ENCODE measurements at regions of chr14 and their contacts with region 1.

Region 1: GRCh38 chr14:97185186-97185585 is 388.0 kb downstream of the VRK1 start:
- DNase-seq: no peak
- ATAC-seq: peak; percentile 45; the same call in 2 of the 3 replicates
- H3K4me3 ChIP-seq: no peak overlapping the region
- H3K27ac ChIP-seq: no peak overlapping the region
- H3K4me1 ChIP-seq: no peaks in the 10 kb centered on the region
- H3K27me3 ChIP-seq: no peaks in the 10 kb centered on the region
- CTCF ChIP-seq: peak; percentile 35 to 48 (median 37); a peak in 4 of 6 replicates
- EP300 ChIP-seq: no peak
- POLR2A ChIP-seq: no peak
- RAD21 ChIP-seq: peak; percentile 73

Region 2: GRCh38 chr14:96683562-96684289 is 501.5 kb before region 1 on chr14:
- CTCF ChIA-PET with region 1: no interaction called
- POLR2A ChIA-PET with region 1: no interaction called
- RAD21 ChIA-PET with region 1: no interaction called
- SMC1A ChIA-PET with region 1: no interaction called
- in situ Hi-C with region 1: no loop called
- intact Hi-C with region 1: no loop called
- DNase-seq: no peak
- ATAC-seq: peak; percentile 40; the same call in 2 of the 3 replicates
- H3K4me3 ChIP-seq: no peak overlapping the region
- H3K27ac ChIP-seq: no peak overlapping the region
- H3K4me1 ChIP-seq: no peaks in the 10 kb centered on the region; the same call in 1 of the 2 replicates
- H3K27me3 ChIP-seq: peaks cover 2% of the 10 kb centered on the region in 2 experiments; a peak in 1 of 4 replicates
- CTCF ChIP-seq: no peak
- EP300 ChIP-seq: no peak
- POLR2A ChIP-seq: no peak
- RAD21 ChIP-seq: no peak

Region 3: GRCh38 chr14:97251491-97252155 is 66.4 kb after region 1 on chr14:
- CTCF ChIA-PET with region 1: interaction called, 5 read pairs
- POLR2A ChIA-PET with region 1: no interaction called
- RAD21 ChIA-PET with region 1: interaction called, 3 read pairs
- SMC1A ChIA-PET with region 1: no interaction called
- in situ Hi-C with region 1: no loop called
- intact Hi-C with region 1: loop called (anchors 5 kb)
- DNase-seq: no peak
- ATAC-seq: peak; percentile 63
- H3K4me3 ChIP-seq: no peak overlapping the region
- H3K27ac ChIP-seq: no peak overlapping the region
- H3K4me1 ChIP-seq: peaks cover 10% of the 10 kb centered on the region; the same call in 1 of the 2 replicates
- H3K27me3 ChIP-seq: no peaks in the 10 kb centered on the region
- CTCF ChIP-seq: peak in 2 of 3 experiments; percentile 7 to 8; a peak in 1 of 6 replicates
- EP300 ChIP-seq: no peak
- POLR2A ChIP-seq: no peak
- RAD21 ChIP-seq: no peak

Region 4: DNA sequence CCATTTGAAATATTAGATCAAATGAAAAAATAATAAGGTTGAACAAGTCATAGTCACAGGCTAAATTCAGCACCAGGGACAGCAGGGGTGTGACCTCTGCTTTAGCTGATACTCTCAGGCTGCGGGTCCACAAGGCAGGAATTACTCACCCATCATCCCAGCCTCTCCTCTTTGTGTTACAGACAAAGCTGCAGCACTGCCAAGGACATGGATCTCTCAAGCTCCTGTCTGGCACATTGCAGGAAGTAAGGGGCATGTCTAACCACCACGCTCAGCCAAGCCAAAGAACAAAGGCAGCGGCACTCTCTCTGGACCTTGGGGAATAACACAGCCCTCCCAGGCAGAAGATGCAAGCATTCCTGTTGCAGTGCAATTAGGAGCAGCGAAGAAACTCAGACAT is 395.8 kb after region 1 on chr14:
- CTCF ChIA-PET with region 1: interaction called, 9 read pairs
- POLR2A ChIA-PET with region 1: no interaction called
- RAD21 ChIA-PET with region 1: interaction called, 3 read pairs
- SMC1A ChIA-PET with region 1: interaction called, 3 read pairs
- in situ Hi-C with region 1: no loop called
- intact Hi-C with region 1: loop called (anchors 10 kb)
- DNase-seq: no peak
- ATAC-seq: no peak
- H3K4me3 ChIP-seq: no peak overlapping the region
- H3K27ac ChIP-seq: no peak overlapping the region
- H3K4me1 ChIP-seq: no peaks in the 10 kb centered on the region
- H3K27me3 ChIP-seq: no peaks in the 10 kb centered on the region
- CTCF ChIP-seq: no peak
- EP300 ChIP-seq: no peak
- POLR2A ChIP-seq: no peak
- RAD21 ChIP-seq: no peak